ENCODE measurements at regions of chr12 and their contacts with region 1.

Region 1: GRCh38 chr12:57111031-57111734 is at the start of gene STAT6:
- DNase-seq: peak; percentile 66 to 86 (median 70)
- ATAC-seq: peak; percentile 81
- H3K4me3 ChIP-seq: peak within 1 kb of the TSS; percentile 48
- H3K27ac ChIP-seq: peak within 1 kb of the TSS; percentile 91
- H3K4me1 ChIP-seq: peaks cover 23 to 30% of the 10 kb centered on the region in 2 experiments; a peak in 4 of 5 replicates
- H3K27me3 ChIP-seq: no peaks in the 10 kb centered on the region
- CTCF ChIP-seq: no peak
- EP300 ChIP-seq: 0 out of 2 replicates have a peak, but pooled peaks have one; percentile 10
- POLR2A ChIP-seq: peak; percentile 85
- RAD21 ChIP-seq: no peak; a peak in 1 of 4 replicates
- polyA plus RNA-seq, gene STAT6: 2.4 to 4.3 TPM

Region 2: GRCh38 chr12:56839915-56840325 is 271.3 kb before region 1 on chr12:
- CTCF ChIA-PET with region 1: no interaction called
- POLR2A ChIA-PET with region 1: no interaction called
- in situ Hi-C with region 1: no loop called
- intact Hi-C with region 1: loop called (anchors 5 kb)
- DNase-seq: peak; percentile 55 to 83 (median 68)
- ATAC-seq: peak; percentile 95
- H3K4me3 ChIP-seq: no peak overlapping the region
- H3K27ac ChIP-seq: no peak overlapping the region
- H3K4me1 ChIP-seq: peaks cover 3 to 7% of the 10 kb centered on the region in 2 experiments; a peak in 4 of 5 replicates
- H3K27me3 ChIP-seq: no peaks in the 10 kb centered on the region
- CTCF ChIP-seq: peak; percentile 92 to 97 (median 97)
- EP300 ChIP-seq: no peak; the same call in 1 of the 2 replicates
- POLR2A ChIP-seq: no peak
- RAD21 ChIP-seq: peak; percentile 99

Region 3: DNA sequence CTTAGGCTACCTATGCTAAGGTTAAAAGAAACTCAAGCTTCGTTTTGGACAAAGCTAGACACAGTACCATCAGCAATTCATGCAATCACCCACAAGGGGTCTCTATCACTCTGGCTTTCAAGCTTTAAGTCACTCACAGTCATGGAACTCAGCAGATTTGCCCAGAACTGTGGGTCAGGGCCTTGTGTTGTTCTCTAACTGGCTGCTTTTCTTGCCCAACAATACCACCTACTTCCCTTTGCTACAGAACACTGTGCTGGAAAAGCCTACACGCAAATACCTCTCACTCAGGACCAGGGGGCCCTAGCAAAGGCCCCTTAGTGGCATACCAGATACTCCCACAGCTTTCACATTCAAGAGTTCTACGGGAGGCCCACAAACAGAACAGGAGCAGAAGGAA is 41.7 kb before region 1 on chr12:
- CTCF ChIA-PET with region 1: interaction called, 73 read pairs
- POLR2A ChIA-PET with region 1: interaction called, 29 read pairs
- in situ Hi-C with region 1: loop called (anchors 5 kb)
- intact Hi-C with region 1: loop called (anchors 1 kb)
- DNase-seq: peak; percentile 43 to 84 (median 50)
- ATAC-seq: peak; percentile 97
- H3K4me3 ChIP-seq: no peak overlapping the region
- H3K27ac ChIP-seq: no peak overlapping the region
- H3K4me1 ChIP-seq: peaks cover 0 to 7% of the 10 kb centered on the region in 2 experiments; a peak in 1 of 5 replicates
- H3K27me3 ChIP-seq: no peaks in the 10 kb centered on the region
- CTCF ChIP-seq: peak; percentile 83 to 93 (median 85)
- EP300 ChIP-seq: no peak
- POLR2A ChIP-seq: no peak
- RAD21 ChIP-seq: peak; percentile 97 to 99

Region 4: DNA sequence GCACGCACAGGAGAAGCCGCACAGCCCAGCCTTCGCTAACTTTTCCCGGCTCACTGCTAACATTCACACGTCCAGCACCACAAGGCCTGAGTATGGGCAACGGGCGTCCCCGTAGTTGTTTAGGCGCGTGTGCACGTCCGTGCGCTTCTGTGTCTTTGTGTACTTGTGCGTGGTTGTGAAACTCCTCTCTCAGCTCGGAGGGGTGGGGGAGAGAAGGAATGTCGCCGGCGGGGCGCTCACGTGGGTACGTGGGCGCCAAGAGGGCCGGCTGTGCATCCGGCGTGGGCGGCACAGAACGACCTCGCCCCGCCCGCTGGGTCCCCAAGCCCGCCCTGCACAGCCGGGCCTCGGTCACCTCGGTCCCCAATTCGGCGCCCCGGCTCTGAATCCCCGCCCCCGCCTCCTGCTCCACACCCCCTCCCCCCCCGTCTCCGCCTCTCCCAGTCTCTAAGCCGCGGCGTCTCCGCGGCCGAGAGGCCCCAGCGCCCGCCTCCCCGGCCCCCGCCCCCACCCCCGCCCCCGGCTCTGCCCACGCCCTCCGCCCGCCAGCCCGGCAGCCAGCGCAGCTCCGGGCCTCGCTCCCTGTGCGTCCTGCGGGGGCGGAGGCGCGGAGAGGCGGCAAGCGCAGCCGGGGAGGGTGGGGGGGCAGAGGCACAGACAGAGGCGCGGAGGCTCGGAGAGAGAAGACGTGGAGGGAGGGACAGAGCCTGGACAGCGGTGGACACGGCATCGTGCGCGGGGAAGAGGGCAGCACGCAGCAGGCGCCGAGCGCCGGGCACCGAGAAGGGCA is 22.5 kb before region 1 on chr12 and contains the start of gene NAB2:
- CTCF ChIA-PET with region 1: interaction called, 3 read pairs
- POLR2A ChIA-PET with region 1: interaction called, 18 read pairs
- in situ Hi-C with region 1: no loop called
- intact Hi-C with region 1: loop called (anchors 1 kb)
- DNase-seq: peak; percentile 85 to 97 (median 90)
- ATAC-seq: peak; percentile 69
- H3K4me3 ChIP-seq: peak within 1 kb of the TSS; percentile 75
- H3K27ac ChIP-seq: peak within 1 kb of the TSS; percentile 93
- H3K4me1 ChIP-seq: peaks cover 33 to 66% of the 10 kb centered on the region in 2 experiments
- H3K27me3 ChIP-seq: no peaks in the 10 kb centered on the region
- CTCF ChIP-seq: no peak
- EP300 ChIP-seq: peak; percentile 47; the same call in 1 of the 2 replicates
- POLR2A ChIP-seq: peak; percentile 78
- RAD21 ChIP-seq: no peak
- polyA plus RNA-seq, gene NAB2: 0.45 to 0.52 TPM